CD4-positive, alpha-beta T cell (primary cell): ENCODE measurements at regions of chr9 and their contacts with region 1.

Region 1: GRCh38 chr9:129139993-129140396 is 28.8 kb downstream of the PTPA start:
- DNase-seq: peak; percentile 53 to 92 (median 75)
- ATAC-seq: peak; percentile 87
- H3K4me3 ChIP-seq: peak overlapping the region; percentile 65
- H3K4me3 Mint-ChIP-seq: peak overlapping the region; percentile 88
- H3K27ac ChIP-seq: peak overlapping the region; percentile 95 to 96
- H3K27ac Mint-ChIP-seq: peak overlapping the region; percentile 89
- H3K4me1 ChIP-seq: peaks cover 44% of the 10 kb centered on the region
- H3K4me1 Mint-ChIP-seq: peaks cover 34% of the 10 kb centered on the region
- H3K27me3 ChIP-seq: no peaks in the 10 kb centered on the region
- H3K27me3 Mint-ChIP-seq: no peaks in the 10 kb centered on the region
- CTCF ChIP-seq: no peak

Region 2: DNA sequence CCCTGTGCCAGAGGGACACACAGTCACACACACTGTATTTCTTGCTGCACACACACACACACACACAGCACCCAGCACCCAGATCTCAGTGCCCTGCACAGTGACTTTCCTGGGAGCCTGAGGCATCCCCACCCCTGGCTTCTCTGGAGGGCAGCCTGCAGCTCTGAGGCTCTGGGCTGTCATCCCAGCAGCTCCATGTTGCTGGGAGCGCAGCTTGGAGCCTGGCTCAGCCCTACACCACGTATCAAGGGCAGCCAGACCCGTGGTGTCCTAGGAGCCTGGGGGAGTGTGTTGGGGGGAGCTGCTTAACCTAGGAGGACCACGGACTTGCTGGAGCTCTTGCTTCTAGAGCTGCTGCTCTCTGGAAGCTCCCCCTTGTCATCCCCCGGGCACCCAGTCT is 32.8 kb after region 1 on chr9:
- CTCF ChIA-PET with region 1: interaction called, 25 read pairs
- POLR2A ChIA-PET with region 1: interaction called, 12 read pairs
- intact Hi-C with region 1: loop called (anchors 2 to 5 kb)
- DNase-seq: no peak
- ATAC-seq: no peak
- H3K4me3 ChIP-seq: no peak overlapping the region
- H3K4me3 Mint-ChIP-seq: peak overlapping the region; percentile 20
- H3K27ac ChIP-seq: no peak overlapping the region
- H3K27ac Mint-ChIP-seq: no peak overlapping the region
- H3K4me1 ChIP-seq: peaks cover 39% of the 10 kb centered on the region
- H3K4me1 Mint-ChIP-seq: peaks cover 10% of the 10 kb centered on the region
- H3K27me3 ChIP-seq: peaks cover 0 to 8% of the 10 kb centered on the region in 2 experiments
- H3K27me3 Mint-ChIP-seq: peaks cover 4% of the 10 kb centered on the region
- CTCF ChIP-seq: no peak

Region 3: GRCh38 chr9:129320575-129321263 is 180.7 kb after region 1 on chr9:
- CTCF ChIA-PET with region 1: interaction called, 5 read pairs
- POLR2A ChIA-PET with region 1: interaction called, 9 read pairs
- intact Hi-C with region 1: loop called in 1 of 2 experiments (anchors 5 kb)
- DNase-seq: peak; percentile 16 to 85 (median 42)
- ATAC-seq: peak; percentile 97
- H3K4me3 ChIP-seq: peak overlapping the region; percentile 46
- H3K4me3 Mint-ChIP-seq: peak overlapping the region; percentile 74
- H3K27ac ChIP-seq: peak overlapping the region in 1 of 2 donors; percentile 50
- H3K27ac Mint-ChIP-seq: peak overlapping the region; percentile 67
- H3K4me1 ChIP-seq: peaks cover 24% of the 10 kb centered on the region
- H3K4me1 Mint-ChIP-seq: peaks cover 17% of the 10 kb centered on the region
- H3K27me3 ChIP-seq: no peaks in the 10 kb centered on the region
- H3K27me3 Mint-ChIP-seq: no peaks in the 10 kb centered on the region
- CTCF ChIP-seq: peak; percentile 25

Region 4: DNA sequence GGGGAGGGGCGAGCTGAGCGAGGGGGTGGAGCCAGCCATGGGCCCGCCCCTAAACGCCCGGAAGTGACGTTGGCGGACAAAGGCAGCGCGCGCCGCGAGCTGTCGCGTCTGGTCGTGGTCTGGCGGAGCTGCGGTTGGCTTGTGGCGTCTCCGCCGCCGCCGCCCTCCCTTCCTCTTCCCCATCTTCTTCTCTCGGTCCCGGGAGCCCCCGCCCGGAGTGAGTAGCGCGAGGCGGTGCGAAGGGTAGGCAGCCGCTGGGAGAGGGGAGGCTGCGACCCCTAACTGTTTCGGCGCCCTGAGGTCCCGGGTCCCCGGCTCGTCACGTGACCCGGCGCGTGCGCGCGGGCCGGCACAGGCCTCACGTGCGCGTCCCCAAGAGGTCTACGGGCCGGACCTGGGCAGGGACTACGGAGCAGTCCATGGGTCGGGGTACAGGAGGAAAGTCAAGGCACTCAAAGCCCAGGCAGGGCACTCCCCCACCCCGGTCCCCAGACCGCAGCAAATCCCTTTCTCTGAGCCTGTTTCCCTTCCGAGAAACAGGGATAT is 486.2 kb after region 1 on chr9 and contains the start of gene NTMT1:
- CTCF ChIA-PET with region 1: interaction called, 13 read pairs
- POLR2A ChIA-PET with region 1: interaction called, 53 read pairs
- intact Hi-C with region 1: no loop called
- DNase-seq: peak; percentile 85 to 97 (median 90)
- ATAC-seq: peak; percentile 65
- H3K4me3 ChIP-seq: peak within 1 kb of the TSS; percentile 75
- H3K4me3 Mint-ChIP-seq: peak within 1 kb of the TSS; percentile 94
- H3K27ac ChIP-seq: peak within 1 kb of the TSS; percentile 77 to 98
- H3K27ac Mint-ChIP-seq: peak within 1 kb of the TSS; percentile 94
- H3K4me1 ChIP-seq: peaks cover 70% of the 10 kb centered on the region
- H3K4me1 Mint-ChIP-seq: peaks cover 63% of the 10 kb centered on the region
- H3K27me3 ChIP-seq: peaks cover 6 to 10% of the 10 kb centered on the region in 2 experiments
- H3K27me3 Mint-ChIP-seq: peaks cover 13% of the 10 kb centered on the region
- CTCF ChIP-seq: no peak
- total RNA-seq, gene NTMT1: 50.7 to 52.5 TPM

Region 5: DNA sequence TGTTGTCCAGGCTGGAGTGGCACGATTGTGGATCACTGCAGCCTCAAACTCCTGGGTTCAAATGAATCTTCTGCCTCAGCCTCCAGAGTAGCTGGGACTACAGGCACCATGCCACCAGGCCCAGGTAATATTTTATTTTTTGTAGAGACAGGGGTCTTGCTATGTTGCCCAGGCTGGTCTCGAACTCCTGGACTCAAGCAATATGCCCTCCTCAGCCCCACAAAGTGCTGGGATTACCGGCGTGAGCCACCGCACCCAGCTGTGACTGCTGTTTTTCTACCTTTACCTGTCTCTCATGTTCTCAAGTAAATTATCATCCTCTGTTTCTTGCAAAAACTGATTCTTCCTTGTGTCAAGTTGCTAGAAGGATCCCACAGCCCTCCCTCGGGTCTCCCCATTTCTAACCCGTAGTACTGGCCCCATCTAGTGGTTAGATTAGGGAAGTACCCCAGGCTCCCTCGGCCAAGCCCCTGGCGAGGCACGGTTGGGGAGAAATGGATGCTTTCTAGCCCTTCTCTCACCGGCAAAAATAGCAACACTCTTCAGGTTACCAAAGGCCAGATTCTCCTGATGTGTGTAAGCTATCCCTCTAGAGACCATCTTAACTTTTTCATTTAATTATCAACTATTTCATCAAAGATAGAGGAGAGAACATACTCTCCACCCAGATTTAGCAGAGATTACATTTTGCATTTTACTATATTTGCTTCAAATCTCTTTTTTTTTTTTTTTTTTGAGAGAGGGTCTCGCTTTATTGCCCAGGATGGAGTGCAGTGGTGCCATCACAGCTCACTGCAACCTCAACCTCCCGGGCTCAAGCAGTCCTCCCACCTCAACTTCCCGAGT is 643.7 kb after region 1 on chr9:
- CTCF ChIA-PET with region 1: interaction called, 6 read pairs
- POLR2A ChIA-PET with region 1: no interaction called
- intact Hi-C with region 1: loop called (anchors 1 to 2 kb)
- DNase-seq: peak; percentile 55 to 84 (median 68)
- ATAC-seq: peak; percentile 100
- H3K4me3 ChIP-seq: no peak overlapping the region
- H3K4me3 Mint-ChIP-seq: no peak overlapping the region
- H3K27ac ChIP-seq: no peak overlapping the region
- H3K27ac Mint-ChIP-seq: no peak overlapping the region
- H3K4me1 ChIP-seq: peaks cover 5% of the 10 kb centered on the region
- H3K4me1 Mint-ChIP-seq: peaks cover 5% of the 10 kb centered on the region
- H3K27me3 ChIP-seq: peaks cover 0 to 2% of the 10 kb centered on the region in 2 experiments
- H3K27me3 Mint-ChIP-seq: peaks cover 8% of the 10 kb centered on the region
- CTCF ChIP-seq: peak; percentile 89